Activated T-helper 1 cell treated with anti-CD3 and anti-CD28 coated beads, Interleukin-12 subunit alpha, Interleukin-12 subunit beta, Interleukin-2, Interleukin-4 antibody, amounts not matched to agents 30 ng/mL and 10 ng/mL and 1 ng/mL, durations not matched to agents 14 hours and 24 hours and 36 hours (primary cell): ENCODE measurements at regions of chr6 and their contacts with region 1.

Region 1: DNA sequence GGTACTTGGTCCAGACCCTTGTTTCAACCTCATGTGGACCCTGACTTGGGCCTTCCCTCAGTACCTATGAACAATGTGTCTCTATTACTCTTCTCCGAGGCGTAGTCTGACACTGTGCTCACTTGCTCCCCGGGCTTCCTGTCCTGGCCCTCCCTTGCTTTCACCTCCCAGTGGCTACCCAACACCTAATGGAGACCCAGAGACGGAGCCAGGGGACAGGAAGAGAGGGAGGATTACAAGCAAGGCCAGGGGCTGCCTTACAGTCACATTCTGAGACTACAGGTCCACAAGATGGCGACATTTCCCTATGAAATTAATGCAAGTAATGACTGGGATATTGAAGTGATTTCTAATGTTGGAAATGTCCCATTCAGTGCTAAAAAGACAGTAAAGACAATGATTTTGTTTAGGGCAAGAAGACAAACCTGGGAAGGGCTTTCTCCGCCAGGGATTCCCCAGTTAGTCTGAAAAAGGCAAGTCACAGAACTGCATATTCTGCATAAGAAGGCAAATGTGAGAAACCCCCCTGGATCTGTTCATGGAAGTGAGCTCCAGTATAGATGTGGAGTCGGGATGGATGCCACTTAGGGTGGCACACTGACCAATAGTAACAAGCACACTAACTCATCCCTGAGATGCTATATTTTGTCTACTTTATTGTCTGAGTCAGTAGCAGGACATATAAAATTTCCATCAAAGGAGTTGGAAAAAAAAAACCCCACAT is 44.0 kb upstream of the ZBTB24 start:
- DNase-seq: peak; percentile 35
- H3K4me3 Mint-ChIP-seq: no peak overlapping the region
- H3K27ac Mint-ChIP-seq: no peak overlapping the region
- H3K4me1 Mint-ChIP-seq: no peaks in the 10 kb centered on the region
- H3K27me3 Mint-ChIP-seq: peaks cover 5% of the 10 kb centered on the region

Region 2: DNA sequence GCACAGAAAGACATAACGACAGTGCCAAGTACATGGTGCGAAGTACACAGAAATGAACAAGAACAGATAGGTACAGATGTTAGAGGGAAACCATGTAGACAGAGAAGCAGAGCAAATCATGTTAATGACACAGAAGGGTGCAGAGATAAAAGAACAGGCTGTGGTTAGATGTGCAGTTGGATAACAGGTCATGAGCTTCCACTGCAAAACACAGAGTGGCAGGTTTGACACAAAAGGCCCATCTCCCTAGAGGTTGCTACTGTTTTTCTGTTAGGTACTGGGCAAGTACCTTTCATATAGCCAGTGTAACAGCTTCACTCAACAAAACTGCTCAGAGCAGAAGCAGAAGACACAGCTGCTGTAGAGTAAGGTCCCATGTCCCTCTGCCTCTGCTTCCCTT is 79.3 kb after region 1 on chr6:
- intact Hi-C with region 1: no loop called
- DNase-seq: no peak
- H3K4me3 Mint-ChIP-seq: no peak overlapping the region
- H3K27ac Mint-ChIP-seq: no peak overlapping the region
- H3K4me1 Mint-ChIP-seq: peaks cover 7% of the 10 kb centered on the region
- H3K27me3 Mint-ChIP-seq: no peaks in the 10 kb centered on the region

Region 3: GRCh38 chr6:109705258-109705657 is 178.2 kb after region 1 on chr6:
- intact Hi-C with region 1: loop called (anchors 1 kb)
- DNase-seq: peak; percentile 53
- H3K4me3 Mint-ChIP-seq: no peak overlapping the region
- H3K27ac Mint-ChIP-seq: no peak overlapping the region
- H3K4me1 Mint-ChIP-seq: peaks cover 5% of the 10 kb centered on the region
- H3K27me3 Mint-ChIP-seq: no peaks in the 10 kb centered on the region

Region 4: DNA sequence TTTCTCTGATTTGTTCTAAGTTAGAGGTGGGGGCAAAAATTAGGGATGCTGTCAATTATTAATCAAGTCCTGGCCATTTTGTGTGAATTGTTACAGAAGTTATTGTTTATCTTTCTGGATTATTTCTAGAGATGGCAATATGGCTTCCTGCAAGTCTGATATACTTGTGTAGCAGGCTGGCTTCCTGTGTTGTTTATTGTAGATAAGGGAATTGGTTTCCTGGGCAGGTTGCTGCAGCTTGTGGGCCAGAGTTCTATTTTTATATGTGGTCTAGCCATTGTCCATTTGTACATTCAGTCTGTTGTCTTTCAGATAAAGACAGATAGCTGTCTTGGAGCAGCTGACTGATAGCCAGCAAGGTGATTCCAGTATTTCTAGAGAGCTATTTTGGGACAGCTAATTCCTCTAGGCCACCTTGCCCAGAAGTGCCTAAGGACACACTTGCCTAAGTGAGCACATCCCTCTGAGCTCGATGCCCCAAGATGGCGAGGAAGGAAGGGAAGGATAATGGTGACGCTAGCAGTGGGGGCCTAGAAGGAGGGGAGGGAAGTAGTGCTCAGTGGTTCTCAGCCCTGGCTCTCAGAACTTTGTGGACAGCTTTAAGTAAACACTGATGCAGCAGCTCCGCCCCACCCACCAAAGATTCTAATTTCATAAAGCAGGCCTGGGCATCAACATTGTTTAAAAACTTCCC is 862.8 kb after region 1 on chr6:
- intact Hi-C with region 1: loop called (anchors 1 kb)
- DNase-seq: no peak
- H3K4me3 Mint-ChIP-seq: no peak overlapping the region
- H3K27ac Mint-ChIP-seq: no peak overlapping the region
- H3K4me1 Mint-ChIP-seq: peaks cover 10% of the 10 kb centered on the region
- H3K27me3 Mint-ChIP-seq: no peaks in the 10 kb centered on the region